Endothelial cell of umbilical vein (primary cell): ENCODE measurements at regions of chr3 and their contacts with region 1.

Region 1: GRCh38 chr3:24773798-24774197 is 279.1 kb upstream of the THRB start:
- DNase-seq: peak; percentile 61
- H3K4me3 ChIP-seq: no peak overlapping the region
- H3K27ac ChIP-seq: no peak overlapping the region
- H3K4me1 ChIP-seq: no peaks in the 10 kb centered on the region
- H3K27me3 ChIP-seq: no peaks in the 10 kb centered on the region
- CTCF ChIP-seq: peak; percentile 69 to 71
- POLR2A ChIP-seq: no peak

Region 2: GRCh38 chr3:24763415-24763814 is 10.4 kb before region 1 on chr3:
- CTCF ChIA-PET with region 1: interaction called, 10 read pairs
- POLR2A ChIA-PET with region 1: no interaction called
- dilution Hi-C with region 1: no loop called
- intact Hi-C with region 1: no loop called
- DNase-seq: no peak
- H3K4me3 ChIP-seq: no peak overlapping the region
- H3K27ac ChIP-seq: no peak overlapping the region
- H3K4me1 ChIP-seq: no peaks in the 10 kb centered on the region
- H3K27me3 ChIP-seq: no peaks in the 10 kb centered on the region
- CTCF ChIP-seq: no peak
- POLR2A ChIP-seq: no peak

Region 3: GRCh38 chr3:24963762-24964625 is 190.2 kb after region 1 on chr3:
- CTCF ChIA-PET with region 1: interaction called, 4 read pairs
- POLR2A ChIA-PET with region 1: no interaction called
- dilution Hi-C with region 1: no loop called
- intact Hi-C with region 1: loop called (anchors 2 kb)
- DNase-seq: peak; percentile 40
- H3K4me3 ChIP-seq: no peak overlapping the region
- H3K27ac ChIP-seq: no peak overlapping the region
- H3K4me1 ChIP-seq: no peaks in the 10 kb centered on the region
- H3K27me3 ChIP-seq: no peaks in the 10 kb centered on the region
- CTCF ChIP-seq: peak; percentile 19 to 38
- POLR2A ChIP-seq: no peak

Region 4: GRCh38 chr3:25313286-25313685 is 539.5 kb after region 1 on chr3:
- CTCF ChIA-PET with region 1: no interaction called
- POLR2A ChIA-PET with region 1: no interaction called
- dilution Hi-C with region 1: no loop called
- intact Hi-C with region 1: loop called (anchors 10 kb)
- DNase-seq: no peak
- H3K4me3 ChIP-seq: no peak overlapping the region
- H3K27ac ChIP-seq: no peak overlapping the region
- H3K4me1 ChIP-seq: no peaks in the 10 kb centered on the region
- H3K27me3 ChIP-seq: peaks cover 0 to 2% of the 10 kb centered on the region in 2 experiments
- CTCF ChIP-seq: no peak
- POLR2A ChIP-seq: no peak